GM10248 (cell line): ENCODE measurements at regions of chr4 and their contacts with region 1.

Region 1: DNA sequence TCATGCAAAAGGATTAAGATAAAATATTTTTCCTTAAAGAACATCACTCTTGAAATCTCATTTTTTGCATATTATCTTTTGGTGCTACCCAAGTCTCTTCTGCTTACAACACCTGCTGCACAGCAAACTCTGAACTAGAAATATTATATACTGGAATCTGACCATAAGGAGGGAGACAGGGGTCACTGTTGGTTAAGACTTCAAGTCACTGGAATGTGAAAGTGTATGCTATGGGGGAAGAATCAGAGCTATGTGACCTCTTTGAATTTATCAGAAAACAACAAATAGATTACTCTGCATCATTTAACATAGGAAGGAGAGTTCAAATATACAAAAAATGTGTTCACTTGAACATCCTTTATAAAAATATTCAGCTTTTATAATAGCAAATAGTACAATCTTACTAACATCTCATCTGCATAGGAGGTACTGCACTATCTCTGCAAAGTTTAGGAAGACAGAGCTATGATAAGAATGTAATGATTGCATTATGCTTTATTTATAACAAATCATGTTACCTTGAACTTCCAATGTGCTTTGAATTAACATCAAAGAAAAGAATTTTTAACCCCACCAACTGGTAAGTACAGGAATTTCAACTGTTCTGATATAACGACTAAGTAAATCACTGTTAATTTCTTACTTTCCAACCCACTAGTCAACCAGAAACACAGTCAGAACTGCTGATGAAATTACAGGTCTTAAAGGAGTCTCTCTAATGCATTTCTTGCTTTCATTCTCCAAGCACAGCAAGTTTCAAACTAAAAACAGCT is 69.8 kb downstream of the ZNF827 start:
- DNase-seq: peak; percentile 29
- CTCF ChIP-seq: no peak

Region 2: GRCh38 chr4:145851511-145852201 is 17.2 kb before region 1 on chr4:
- CTCF ChIA-PET with region 1: interaction called, 12 read pairs
- POLR2A ChIA-PET with region 1: no interaction called
- DNase-seq: no peak
- CTCF ChIP-seq: no peak

Region 3: DNA sequence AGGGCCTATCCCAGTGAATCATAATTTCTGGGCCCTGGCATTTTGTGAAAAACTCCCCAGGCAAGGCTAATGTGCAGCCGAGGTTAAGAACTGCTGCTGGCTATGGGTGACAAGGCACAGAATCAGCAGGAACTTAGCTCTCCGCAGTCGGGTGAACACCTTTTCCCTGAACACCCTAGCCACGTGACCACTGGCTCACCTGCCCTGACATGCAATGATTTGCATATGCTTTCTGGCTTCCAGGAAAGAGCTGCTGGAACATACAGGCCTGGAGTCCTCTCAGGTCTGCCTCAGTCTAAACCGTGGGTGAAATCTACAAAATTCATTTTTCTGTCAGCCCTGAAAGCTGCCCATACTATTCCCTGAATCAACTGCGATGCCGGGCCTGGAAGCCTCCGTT is 13.2 kb after region 1 on chr4:
- CTCF ChIA-PET with region 1: interaction called, 14 read pairs
- POLR2A ChIA-PET with region 1: no interaction called
- DNase-seq: no peak
- CTCF ChIP-seq: no peak

Region 4: DNA sequence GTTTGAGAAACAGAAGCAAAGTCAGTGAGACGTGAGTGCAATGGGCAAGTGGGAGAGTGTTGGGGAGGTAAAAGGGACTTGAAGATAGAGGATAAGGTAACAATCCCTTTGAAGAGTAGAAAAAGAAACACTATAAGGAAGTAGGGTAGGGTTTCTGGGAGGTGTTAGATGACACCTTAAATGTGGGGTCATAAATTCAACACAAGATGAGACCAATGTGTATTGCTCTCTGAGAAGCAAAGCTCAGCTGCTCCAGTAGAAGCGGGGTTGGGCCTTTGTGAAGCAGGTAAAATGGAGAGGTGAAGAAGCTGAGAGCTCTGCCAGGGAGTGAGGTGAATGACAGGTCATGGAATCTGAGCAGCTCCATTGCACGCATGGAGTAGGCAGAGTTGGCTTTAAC is 430.8 kb after region 1 on chr4:
- CTCF ChIA-PET with region 1: no interaction called
- POLR2A ChIA-PET with region 1: no interaction called
- DNase-seq: no peak
- CTCF ChIP-seq: no peak